Left cardiac atrium (tissue), 4 donors: ENCODE measurements at regions of chr15 and their contacts with region 1.

Region 1: GRCh38 chr15:35751413-35752133 is 205.6 kb upstream of the DPH6 start:
- DNase-seq: peak; percentile 79
- ATAC-seq: peak; percentile 80 to 86

Region 2: GRCh38 chr15:35376707-35377106 is 374.9 kb before region 1 on chr15:
- intact Hi-C with region 1: no loop called
- DNase-seq: no peak
- ATAC-seq: no peak

Region 3: DNA sequence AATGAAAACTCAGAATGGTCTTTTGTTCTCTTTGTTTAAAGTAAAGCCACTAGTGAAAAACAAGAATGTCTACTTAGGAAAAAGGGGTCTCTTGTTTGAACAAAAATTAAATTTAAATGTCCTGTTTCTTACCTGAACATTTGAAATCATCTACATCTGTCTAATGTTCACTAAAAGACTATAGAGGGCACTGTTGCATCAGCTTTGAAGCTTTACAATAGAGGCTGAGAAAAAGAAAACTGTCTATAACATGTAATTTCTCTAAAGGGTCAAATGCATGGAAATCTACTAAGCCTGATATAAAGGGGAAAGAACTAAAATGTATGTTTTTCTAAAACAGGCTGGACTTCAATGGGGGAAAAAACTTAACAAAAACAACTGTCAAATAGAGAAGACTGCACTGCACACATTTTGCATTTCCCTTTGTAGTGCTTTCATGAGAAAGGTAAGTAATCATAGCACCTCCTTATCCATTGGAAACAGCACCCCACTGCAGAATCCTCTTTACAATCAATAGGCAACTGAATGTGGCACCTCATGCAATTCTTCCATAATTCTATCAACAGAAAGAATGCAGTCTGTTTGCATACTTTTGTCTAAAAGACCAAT is 231.9 kb before region 1 on chr15:
- intact Hi-C with region 1: loop called in 1 of 2 experiments (anchors 5 kb)
- DNase-seq: no peak
- ATAC-seq: peak; percentile 66 to 74